Left cardiac atrium (tissue), 4 donors: ENCODE measurements at regions of chr17 and their contacts with region 1.

Region 1: GRCh38 chr17:77096570-77097214 is 44.1 kb upstream of the SEC14L1 start:
- DNase-seq: peak; percentile 60
- ATAC-seq: peak; percentile 60 to 77

Region 2: DNA sequence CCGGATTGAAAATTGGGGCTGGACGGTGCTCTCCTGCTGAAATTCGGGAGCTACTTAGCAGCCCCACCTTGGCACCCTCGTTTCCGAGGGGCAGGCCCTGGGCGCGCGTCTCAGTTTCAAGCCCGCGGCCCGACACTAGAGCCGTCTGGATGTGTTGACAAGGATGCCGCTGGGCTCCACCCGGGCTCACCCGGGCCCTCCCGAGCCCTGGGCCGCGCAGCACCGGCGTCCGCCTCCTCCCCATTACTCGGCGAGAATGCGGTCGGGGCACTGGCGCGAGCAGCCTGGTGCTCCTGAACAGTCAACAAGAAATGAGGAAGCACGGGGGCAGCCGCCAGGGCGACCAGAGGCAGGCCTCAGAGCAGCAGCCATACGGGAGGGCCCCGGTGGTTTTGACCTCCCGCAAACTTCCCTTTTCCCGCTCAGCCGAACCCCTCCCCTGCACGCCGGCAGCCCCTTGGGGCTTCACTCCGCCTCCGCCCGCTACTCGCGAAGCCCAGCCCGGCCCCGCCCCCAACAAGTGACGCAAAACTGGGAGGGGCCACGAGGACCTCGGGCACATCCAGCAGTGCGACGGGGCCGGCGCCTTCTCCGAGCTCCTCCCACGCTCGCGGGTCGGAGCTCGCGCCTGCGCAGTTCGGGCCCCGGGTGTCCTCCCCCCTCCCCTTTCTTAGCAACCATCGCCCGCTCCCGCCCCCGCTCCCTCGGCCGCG is 43.6 kb after region 1 on chr17:
- intact Hi-C with region 1: loop called (anchors 5 kb)
- DNase-seq: peak; percentile 99
- ATAC-seq: peak; percentile 98

Region 3: GRCh38 chr17:77145612-77146245 is 49.0 kb after region 1 on chr17:
- intact Hi-C with region 1: loop called (anchors 5 kb)
- DNase-seq: peak; percentile 77
- ATAC-seq: peak; percentile 37 to 61

Region 4: DNA sequence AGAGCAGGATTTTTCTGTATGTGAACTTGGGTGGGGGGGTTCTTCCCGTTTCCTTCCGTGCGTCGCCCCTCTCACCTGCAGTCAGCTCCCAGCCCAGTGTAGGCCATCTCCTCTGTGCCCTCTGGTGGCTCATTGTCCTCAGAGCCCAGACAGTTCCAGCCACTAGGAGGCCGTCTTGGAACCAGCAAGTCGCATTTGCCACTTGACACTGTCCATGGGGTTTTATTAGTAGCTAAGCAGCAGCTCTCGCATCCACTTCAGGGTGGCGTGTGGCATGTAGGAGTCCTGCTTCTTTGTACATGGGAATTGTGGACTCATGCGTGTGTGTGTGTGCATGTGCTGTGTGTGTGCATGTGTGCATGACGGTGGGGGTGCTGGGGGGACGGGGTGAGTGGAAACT is 118.1 kb after region 1 on chr17:
- intact Hi-C with region 1: loop called in 1 of 2 experiments (anchors 2 kb)
- DNase-seq: no peak
- ATAC-seq: peak; percentile 53 to 60